CD4-positive, alpha-beta memory T cell (primary cell): ENCODE measurements at regions of chr12 and their contacts with region 1.

Region 1: DNA sequence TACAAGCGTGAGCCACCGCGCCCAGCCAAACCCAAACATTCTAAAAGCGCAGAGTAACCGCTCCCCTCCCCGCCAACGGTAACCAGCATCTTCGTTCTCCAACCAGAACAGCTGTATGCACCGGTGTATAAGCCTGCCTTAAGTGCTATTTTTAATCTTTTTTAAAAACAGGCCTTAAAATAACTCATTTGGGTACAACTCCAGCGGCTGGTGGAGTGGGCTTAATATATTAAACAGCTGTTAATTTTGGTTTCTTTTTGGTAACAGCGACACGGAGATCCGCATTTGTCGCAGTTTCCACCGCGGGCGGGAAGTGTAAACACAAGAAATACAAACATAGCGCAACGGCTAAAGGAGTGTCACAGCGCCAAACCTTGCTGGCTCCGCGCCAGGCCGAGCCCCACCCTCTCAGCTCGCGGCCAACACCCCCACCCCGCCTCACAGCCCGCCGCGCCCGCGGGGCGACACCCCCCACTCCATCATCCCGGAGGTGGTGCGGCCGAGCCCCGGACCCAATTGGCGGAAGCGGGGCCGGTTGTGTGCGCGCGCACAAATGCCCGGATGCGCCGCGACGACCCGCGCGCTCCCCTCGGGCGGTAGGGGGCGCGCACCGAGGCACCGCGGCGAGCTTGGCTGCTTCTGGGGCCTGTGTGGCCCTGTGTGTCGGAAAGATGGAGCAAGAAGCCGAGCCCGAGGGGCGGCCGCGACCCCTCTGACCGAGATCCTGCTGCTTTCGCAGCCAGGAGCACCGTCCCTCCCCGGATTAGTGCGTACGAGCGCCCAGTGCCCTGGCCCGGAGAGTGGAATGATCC is at the start of gene MDM2:
- DNase-seq: peak; percentile 97 to 99 (median 99)
- H3K4me3 ChIP-seq: peak within 1 kb of the TSS; percentile 42 to 94
- H3K4me3 Mint-ChIP-seq: peak within 1 kb of the TSS; percentile 95 to 97 (median 96)
- H3K27ac ChIP-seq: peak within 1 kb of the TSS; percentile 92
- H3K27ac Mint-ChIP-seq: peak within 1 kb of the TSS; percentile 98 to 99 (median 99)
- H3K4me1 ChIP-seq: peaks cover 28% of the 10 kb centered on the region
- H3K4me1 Mint-ChIP-seq: peaks cover 9 to 33% (median 22%) of the 10 kb centered on the region in 4 donors
- H3K27me3 ChIP-seq: no peaks in the 10 kb centered on the region
- H3K27me3 Mint-ChIP-seq: no peaks in the 10 kb centered on the region
- total RNA-seq, gene MDM2: 117 to 121 TPM

Region 2: DNA sequence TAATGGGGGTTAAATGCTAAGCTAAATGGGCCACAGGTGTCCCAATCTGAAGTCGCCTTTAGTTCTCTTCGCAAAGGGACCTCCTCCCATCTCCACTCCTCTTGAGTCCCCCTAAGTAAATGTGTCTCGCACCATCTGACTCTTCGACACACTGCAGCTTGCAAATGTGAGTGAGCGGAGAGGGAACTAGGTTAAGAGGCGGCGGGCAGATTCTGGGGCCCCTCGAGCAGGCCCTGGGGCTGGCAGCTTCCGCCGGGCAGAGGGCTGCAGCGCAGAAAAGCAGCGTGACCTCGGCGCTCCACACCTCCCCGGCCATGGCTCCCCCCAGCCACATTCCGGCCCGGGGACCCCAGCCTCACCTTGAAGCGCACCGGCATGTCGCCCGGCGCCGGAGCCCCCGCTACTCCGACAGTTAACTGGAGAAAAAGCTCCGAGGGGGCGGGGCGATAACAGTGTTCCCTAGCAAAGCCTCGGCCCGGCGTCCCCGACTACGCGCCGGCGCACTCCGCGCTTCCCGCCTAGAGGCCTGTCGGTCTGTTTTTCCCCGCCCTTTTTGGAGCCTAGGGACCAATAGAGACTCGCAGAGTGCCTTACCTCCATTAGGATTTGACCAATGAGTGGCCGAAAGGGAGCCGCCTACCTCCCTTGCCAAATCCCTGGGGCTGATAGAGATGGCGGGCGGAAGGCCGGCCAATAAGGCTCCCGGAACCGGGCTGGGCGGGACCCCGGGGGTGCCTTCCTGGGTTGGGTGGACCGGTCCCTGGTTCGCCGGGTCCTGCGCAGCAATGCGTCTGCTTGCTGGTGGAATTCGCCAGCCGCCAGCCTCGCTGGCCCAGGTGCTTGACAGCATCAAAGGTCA is 475.7 kb before region 1 on chr12 and contains the start of gene MDM1:
- CTCF ChIA-PET with region 1: no interaction called
- POLR2A ChIA-PET with region 1: interaction called, 9 read pairs
- intact Hi-C with region 1: loop called (anchors 2 kb)
- DNase-seq: peak; percentile 95 to 98 (median 96)
- H3K4me3 ChIP-seq: peak within 1 kb of the TSS; percentile 60 to 77
- H3K4me3 Mint-ChIP-seq: peak within 1 kb of the TSS; percentile 88 to 93 (median 90)
- H3K27ac ChIP-seq: peak within 1 kb of the TSS; percentile 58
- H3K27ac Mint-ChIP-seq: peak within 1 kb of the TSS; percentile 64 to 95 (median 91)
- H3K4me1 ChIP-seq: peaks cover 30% of the 10 kb centered on the region
- H3K4me1 Mint-ChIP-seq: peaks cover 32 to 49% (median 42%) of the 10 kb centered on the region in 4 donors
- H3K27me3 ChIP-seq: no peaks in the 10 kb centered on the region
- H3K27me3 Mint-ChIP-seq: peaks cover 0 to 2% of the 10 kb centered on the region in 2 donors
- total RNA-seq, gene MDM1: 27.0 to 29.4 TPM

Region 3: DNA sequence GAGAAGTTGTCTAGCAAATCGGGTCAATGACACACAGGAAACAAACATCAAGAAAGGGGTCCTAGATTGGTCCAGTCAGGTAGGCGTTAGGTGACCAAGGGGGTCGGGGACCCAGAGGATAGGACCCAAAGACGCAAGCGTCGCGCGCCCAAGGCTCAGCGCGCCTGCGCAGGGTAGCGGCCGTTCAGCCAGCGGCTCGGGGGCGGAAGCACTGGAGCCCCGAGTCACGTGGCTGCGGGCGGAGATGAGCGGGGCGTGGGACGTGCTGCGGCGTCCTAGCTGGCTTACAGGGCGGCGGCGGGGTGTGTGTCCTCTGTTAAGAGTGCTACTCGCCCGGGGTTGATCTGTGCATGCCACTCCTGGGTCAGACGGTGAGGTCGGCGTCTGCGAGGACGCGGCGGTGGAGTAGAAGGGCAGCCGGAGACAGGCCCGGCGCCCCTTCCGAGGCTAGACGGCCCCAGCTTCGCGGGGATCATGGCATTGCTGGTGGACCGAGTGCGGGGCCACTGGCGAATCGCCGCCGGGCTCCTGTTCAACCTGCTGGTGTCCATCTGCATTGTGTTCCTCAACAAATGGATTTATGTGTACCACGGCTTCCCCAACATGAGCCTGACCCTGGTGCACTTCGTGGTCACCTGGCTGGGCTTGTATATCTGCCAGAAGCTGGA is 61.7 kb before region 1 on chr12 and contains the start of gene SLC35E3:
- CTCF ChIA-PET with region 1: interaction called, 16 read pairs
- POLR2A ChIA-PET with region 1: interaction called, 93 read pairs
- intact Hi-C with region 1: loop called (anchors 1 kb)
- DNase-seq: peak; percentile 86 to 91 (median 88)
- H3K4me3 ChIP-seq: peak within 1 kb of the TSS; percentile 74 to 78
- H3K4me3 Mint-ChIP-seq: peak within 1 kb of the TSS; percentile 92 to 99 (median 98)
- H3K27ac ChIP-seq: peak within 1 kb of the TSS; percentile 69
- H3K27ac Mint-ChIP-seq: peak within 1 kb of the TSS; percentile 89 to 97 (median 93)
- H3K4me1 ChIP-seq: peaks cover 21% of the 10 kb centered on the region
- H3K4me1 Mint-ChIP-seq: peaks cover 26 to 46% (median 35%) of the 10 kb centered on the region in 4 donors
- H3K27me3 ChIP-seq: no peaks in the 10 kb centered on the region
- H3K27me3 Mint-ChIP-seq: no peaks in the 10 kb centered on the region
- total RNA-seq, gene SLC35E3: 8.2 to 11.5 TPM

Region 4: DNA sequence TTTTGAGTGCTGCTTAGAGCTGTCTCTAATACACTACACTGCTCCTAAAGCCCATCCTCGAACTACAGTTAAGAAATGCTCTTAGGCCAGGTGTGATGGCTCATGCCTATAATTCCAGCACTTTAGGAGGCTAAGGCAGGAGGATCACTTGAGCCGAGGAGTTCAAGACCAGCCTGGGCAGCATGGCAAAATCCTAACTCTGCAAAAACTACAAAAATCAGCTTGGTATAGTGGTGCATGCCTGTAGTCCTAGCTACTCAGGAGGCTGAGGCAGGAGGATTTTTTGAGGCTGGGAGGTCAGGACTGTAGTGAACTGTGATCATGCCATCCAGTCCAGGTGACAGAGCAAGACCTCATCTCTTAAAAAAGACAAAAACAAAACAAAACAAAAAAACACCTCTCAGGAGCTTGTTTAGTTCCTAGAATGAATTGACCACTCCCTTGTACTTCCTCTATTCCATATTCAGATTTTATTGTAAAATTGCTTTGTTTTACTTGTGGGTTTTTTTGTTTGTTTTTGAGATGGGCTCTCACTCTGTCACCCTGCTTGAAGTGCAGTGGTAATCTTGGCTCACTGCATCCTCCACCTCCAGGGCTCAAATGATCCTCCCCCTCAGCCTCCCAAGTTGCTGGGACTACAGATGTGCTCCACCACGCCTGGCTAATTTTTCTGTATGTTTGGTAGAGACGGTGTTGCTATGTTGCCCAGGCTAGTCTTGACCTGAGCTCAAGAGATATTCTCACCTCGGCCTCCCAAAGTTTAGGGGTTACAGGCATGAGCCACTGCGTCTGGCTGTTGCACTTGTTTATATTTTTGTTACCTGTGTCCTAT is 13.8 kb after region 1 on chr12:
- CTCF ChIA-PET with region 1: interaction called, 26 read pairs
- POLR2A ChIA-PET with region 1: interaction called, 24 read pairs
- intact Hi-C with region 1: no loop called
- DNase-seq: no peak
- H3K4me3 ChIP-seq: no peak overlapping the region
- H3K4me3 Mint-ChIP-seq: peak overlapping the region in 2 of 8 donors; percentile 10 to 53
- H3K27ac ChIP-seq: no peak overlapping the region
- H3K27ac Mint-ChIP-seq: peak overlapping the region in 6 of 7 donors; percentile 18 to 78 (median 64)
- H3K4me1 ChIP-seq: peaks cover 16% of the 10 kb centered on the region
- H3K4me1 Mint-ChIP-seq: peaks cover 13 to 24% (median 18%) of the 10 kb centered on the region in 4 donors
- H3K27me3 ChIP-seq: no peaks in the 10 kb centered on the region
- H3K27me3 Mint-ChIP-seq: no peaks in the 10 kb centered on the region

Region 5: DNA sequence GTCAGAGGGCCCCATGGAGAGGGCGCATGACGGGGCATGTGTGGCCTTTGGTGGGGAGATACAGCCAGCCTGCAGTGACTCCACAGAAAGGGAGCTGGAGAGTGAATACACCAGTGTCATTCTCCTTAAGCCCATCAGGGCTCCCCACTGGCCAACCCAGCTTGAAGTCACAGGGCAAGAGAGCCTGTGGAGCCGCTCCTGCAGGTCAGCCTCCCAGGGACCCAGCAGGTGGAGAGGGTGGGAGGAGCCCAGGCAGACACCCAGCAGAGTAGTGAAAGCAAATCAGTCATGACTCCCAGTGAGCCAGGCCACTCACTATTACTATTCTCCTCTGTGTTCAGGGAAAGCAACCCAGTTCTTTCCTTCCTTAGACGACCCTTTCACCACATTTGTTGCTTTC is 235.2 kb after region 1 on chr12:
- CTCF ChIA-PET with region 1: no interaction called
- POLR2A ChIA-PET with region 1: no interaction called
- intact Hi-C with region 1: no loop called
- DNase-seq: no peak
- H3K4me3 ChIP-seq: no peak overlapping the region
- H3K4me3 Mint-ChIP-seq: no peak overlapping the region
- H3K27ac ChIP-seq: no peak overlapping the region
- H3K27ac Mint-ChIP-seq: no peak overlapping the region
- H3K4me1 ChIP-seq: no peaks in the 10 kb centered on the region
- H3K4me1 Mint-ChIP-seq: no peaks in the 10 kb centered on the region
- H3K27me3 ChIP-seq: no peaks in the 10 kb centered on the region
- H3K27me3 Mint-ChIP-seq: peaks cover under 1 to 3% of the 10 kb centered on the region in 2 donors

Region 6: GRCh38 chr12:69151254-69151764 is 343.5 kb after region 1 on chr12:
- CTCF ChIA-PET with region 1: no interaction called
- POLR2A ChIA-PET with region 1: no interaction called
- intact Hi-C with region 1: no loop called
- DNase-seq: no peak
- H3K4me3 ChIP-seq: no peak overlapping the region
- H3K4me3 Mint-ChIP-seq: no peak overlapping the region
- H3K27ac ChIP-seq: no peak overlapping the region
- H3K27ac Mint-ChIP-seq: no peak overlapping the region
- H3K4me1 ChIP-seq: peaks cover 5% of the 10 kb centered on the region
- H3K4me1 Mint-ChIP-seq: peaks cover 6 to 13% (median 9%) of the 10 kb centered on the region in 4 donors
- H3K27me3 ChIP-seq: no peaks in the 10 kb centered on the region
- H3K27me3 Mint-ChIP-seq: no peaks in the 10 kb centered on the region

Region 7: DNA sequence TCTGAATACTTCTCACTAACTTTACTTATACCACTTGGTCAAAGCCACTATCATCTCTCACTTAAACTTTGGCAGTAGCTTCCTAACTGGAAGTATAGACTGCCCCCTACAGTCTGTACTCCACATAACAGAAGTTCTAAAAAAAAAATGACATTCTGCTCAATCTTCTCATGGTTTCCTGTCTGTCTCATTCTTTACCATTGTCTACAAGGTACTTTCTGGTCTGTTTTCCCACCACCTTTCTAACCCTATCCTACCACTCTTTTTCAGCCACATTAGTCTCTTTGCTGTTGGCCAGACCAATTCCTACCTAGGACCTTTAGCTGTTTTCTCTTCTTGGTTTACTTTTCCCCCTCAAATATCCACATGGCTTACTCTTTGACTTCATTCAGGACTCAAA is 446.3 kb after region 1 on chr12:
- CTCF ChIA-PET with region 1: no interaction called
- POLR2A ChIA-PET with region 1: no interaction called
- intact Hi-C with region 1: loop called (anchors 5 kb)
- DNase-seq: peak in 4 of 5 donors; percentile 65 to 68 (median 67)
- H3K4me3 ChIP-seq: no peak overlapping the region
- H3K4me3 Mint-ChIP-seq: no peak overlapping the region
- H3K27ac ChIP-seq: peak overlapping the region; percentile 36
- H3K27ac Mint-ChIP-seq: peak overlapping the region; percentile 57 to 92 (median 86)
- H3K4me1 ChIP-seq: peaks cover 23% of the 10 kb centered on the region
- H3K4me1 Mint-ChIP-seq: peaks cover 22 to 43% (median 34%) of the 10 kb centered on the region in 4 donors
- H3K27me3 ChIP-seq: no peaks in the 10 kb centered on the region
- H3K27me3 Mint-ChIP-seq: no peaks in the 10 kb centered on the region